ENCODE measurements at regions of chr1 and their contacts with region 1.

Region 1: DNA sequence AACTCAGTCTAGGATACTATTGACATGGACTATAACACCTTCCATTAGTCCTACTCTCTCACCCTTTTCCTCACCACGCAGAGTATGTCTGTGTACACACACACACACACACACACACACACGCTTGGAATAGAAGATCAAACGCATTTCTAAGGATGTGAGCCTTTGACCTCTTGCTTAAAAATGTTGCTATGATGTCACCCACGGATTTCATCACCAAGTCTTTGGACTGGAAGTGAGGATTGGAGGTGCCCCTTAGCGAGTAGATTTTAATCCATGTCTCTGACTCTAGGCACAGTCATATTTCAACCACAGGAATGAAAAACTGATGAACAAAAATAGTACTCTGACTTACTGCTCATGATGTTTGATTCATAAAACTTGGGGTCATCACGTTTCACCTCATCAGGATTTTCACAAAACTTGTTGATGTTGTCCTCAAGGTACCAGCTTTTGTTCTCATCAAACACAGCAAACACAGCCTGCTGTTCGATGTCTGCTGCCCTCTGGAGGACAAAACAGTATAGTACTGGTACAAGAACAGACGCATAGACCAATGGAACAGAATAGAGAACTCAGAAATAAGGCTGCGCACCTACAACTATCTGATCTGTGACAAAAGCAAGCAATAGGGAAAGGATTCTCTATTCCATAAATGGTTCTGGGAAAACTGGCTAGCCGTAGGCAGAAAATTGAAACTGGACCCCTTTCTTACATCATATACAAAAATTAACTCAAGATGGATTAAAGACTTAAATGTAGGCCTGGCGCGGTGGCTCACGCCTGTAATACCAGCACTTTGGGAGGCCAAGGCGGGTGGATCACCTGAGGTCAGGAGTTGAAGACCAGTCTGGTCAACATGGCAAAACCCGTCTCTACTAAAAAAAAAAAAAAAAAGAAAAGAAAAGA is 39.9 kb downstream of the F5 start:
- DNase-seq: peak; percentile 44 to 63
- H3K4me3 ChIP-seq: no peak overlapping the region
- H3K27ac ChIP-seq: no peak overlapping the region
- H3K4me1 ChIP-seq: no peaks in the 10 kb centered on the region
- H3K27me3 ChIP-seq: no peaks in the 10 kb centered on the region
- CTCF ChIP-seq: peak; percentile 90

Region 2: GRCh38 chr1:169363046-169363730 is 183.2 kb before region 1 on chr1:
- CTCF ChIA-PET with region 1: no interaction called
- POLR2A ChIA-PET with region 1: no interaction called
- intact Hi-C with region 1: no loop called
- DNase-seq: peak; percentile 22 to 77
- H3K4me3 ChIP-seq: no peak overlapping the region
- H3K27ac ChIP-seq: peak overlapping the region; percentile 26
- H3K4me1 ChIP-seq: peaks cover 33% of the 10 kb centered on the region
- H3K27me3 ChIP-seq: no peaks in the 10 kb centered on the region
- CTCF ChIP-seq: no peak

Region 3: GRCh38 chr1:169466259-169467230 is 79.8 kb before region 1 on chr1:
- CTCF ChIA-PET with region 1: interaction called, 5 read pairs
- POLR2A ChIA-PET with region 1: no interaction called
- intact Hi-C with region 1: loop called (anchors 1 kb)
- DNase-seq: peak in 1 of 2 experiments; percentile 29
- H3K4me3 ChIP-seq: no peak overlapping the region
- H3K27ac ChIP-seq: no peak overlapping the region
- H3K4me1 ChIP-seq: no peaks in the 10 kb centered on the region
- H3K27me3 ChIP-seq: no peaks in the 10 kb centered on the region
- CTCF ChIP-seq: peak; percentile 67; the same call in 1 of the 2 replicates

Region 4: DNA sequence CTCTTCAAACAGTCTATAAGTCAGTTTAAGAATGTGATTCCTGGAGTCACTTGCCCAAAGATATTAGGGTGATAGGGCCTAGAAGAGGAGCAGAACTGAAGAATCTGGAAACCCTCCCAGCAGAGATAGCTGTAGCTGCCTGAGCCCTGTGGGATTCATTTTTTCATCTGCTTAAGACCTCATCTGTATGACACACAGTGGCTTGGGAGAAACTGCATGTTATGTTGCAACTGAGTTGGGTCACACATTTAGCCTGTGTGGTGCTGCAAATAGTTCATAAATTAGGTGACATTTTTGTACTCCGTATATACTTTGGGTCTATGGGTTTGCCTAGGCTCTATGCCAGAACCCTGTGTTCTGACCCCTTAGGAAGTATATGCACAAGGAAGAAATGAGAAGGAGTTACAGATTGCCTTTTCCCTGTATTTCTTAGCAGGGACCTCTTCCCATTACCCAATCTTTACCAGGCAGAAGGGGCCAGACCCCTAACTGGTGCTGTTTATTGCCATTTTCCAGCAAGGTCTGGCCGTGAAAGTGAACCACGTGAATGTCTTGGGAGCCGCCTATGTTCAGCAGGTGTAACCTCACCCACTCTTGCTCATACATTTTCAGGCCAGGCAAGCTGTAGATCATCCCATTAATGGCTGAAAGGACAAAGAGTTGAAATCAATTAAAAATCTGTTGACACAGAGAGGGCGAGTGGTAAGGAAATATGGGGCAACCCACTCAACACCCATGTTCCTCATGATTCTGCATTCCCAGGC is 18.7 kb before region 1 on chr1:
- CTCF ChIA-PET with region 1: no interaction called
- POLR2A ChIA-PET with region 1: no interaction called
- intact Hi-C with region 1: no loop called
- DNase-seq: no peak
- H3K4me3 ChIP-seq: no peak overlapping the region
- H3K27ac ChIP-seq: peak overlapping the region; percentile 89
- H3K4me1 ChIP-seq: peaks cover 41% of the 10 kb centered on the region
- H3K27me3 ChIP-seq: no peaks in the 10 kb centered on the region
- CTCF ChIP-seq: no peak

Measured in PC-9 (cell line).